H1 (cell line): ENCODE measurements at regions of chr12 and their contacts with region 1.

Region 1: DNA sequence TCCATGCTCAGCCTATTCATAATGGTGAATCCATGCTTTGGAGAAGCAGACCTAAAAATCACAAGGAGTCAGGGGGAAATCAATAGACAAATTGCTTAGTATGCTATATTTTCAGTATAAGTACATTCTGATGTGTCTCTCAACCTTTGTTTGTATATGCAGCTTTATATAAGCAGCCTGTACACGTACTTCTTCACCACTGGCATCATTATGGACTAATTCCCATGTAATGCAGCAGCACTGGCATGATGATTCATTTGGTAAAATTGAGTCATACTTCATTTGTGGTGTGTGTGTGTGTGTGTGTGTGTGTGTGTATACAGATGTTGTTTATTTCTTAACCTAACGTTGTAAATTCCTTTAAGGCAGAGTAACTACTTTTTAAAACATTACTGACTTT is 10.9 kb downstream of the DCP1B start:
- DNase-seq: no peak
- H3K4me3 ChIP-seq: no peak overlapping the region
- H3K27ac ChIP-seq: no peak overlapping the region
- H3K4me1 ChIP-seq: peaks cover 0 to 16% (median 9%) of the 10 kb centered on the region in 4 experiments; a peak in 5 of 7 replicates
- H3K27me3 ChIP-seq: no peaks in the 10 kb centered on the region
- CTCF ChIP-seq: no peak
- EP300 ChIP-seq: no peak
- POLR2A ChIP-seq: no peak
- RAD21 ChIP-seq: no peak

Region 2: DNA sequence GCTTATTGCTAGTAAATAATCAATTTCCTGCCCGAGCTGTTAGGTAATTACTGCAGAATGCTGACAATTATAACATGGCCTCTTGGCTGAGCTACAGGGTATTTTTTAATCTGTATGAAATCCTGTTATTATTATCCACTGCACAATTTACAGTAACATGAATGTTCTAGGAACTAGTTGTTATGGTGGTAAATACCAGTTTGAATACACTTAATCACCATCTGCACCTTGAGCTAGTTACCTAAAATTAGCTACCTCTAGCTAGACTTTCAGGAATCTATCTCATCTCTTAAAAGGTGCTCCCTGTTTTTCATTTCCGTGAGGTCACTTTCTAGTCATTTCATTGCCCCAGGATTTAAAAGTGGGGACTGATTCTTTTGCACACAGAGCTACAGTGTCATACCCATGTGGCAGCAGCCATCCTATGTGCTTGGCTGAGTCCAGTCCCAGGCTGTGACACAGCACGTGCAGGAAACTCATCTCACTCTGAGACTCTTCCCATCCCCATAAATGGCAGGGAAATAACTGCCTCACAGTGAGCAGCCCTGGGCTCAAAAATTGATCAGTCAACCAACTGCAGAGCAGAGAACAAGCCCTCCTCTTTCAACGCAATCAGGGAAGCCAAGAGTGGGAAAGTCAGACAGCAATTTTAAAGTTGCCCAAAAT is 26.6 kb before region 1 on chr12:
- CTCF ChIA-PET with region 1: no interaction called
- POLR2A ChIA-PET with region 1: no interaction called
- DNase-seq: no peak
- H3K4me3 ChIP-seq: no peak overlapping the region
- H3K27ac ChIP-seq: no peak overlapping the region
- H3K4me1 ChIP-seq: no peaks in the 10 kb centered on the region
- H3K27me3 ChIP-seq: no peaks in the 10 kb centered on the region
- CTCF ChIP-seq: no peak
- EP300 ChIP-seq: no peak
- POLR2A ChIP-seq: no peak
- RAD21 ChIP-seq: no peak

Region 3: DNA sequence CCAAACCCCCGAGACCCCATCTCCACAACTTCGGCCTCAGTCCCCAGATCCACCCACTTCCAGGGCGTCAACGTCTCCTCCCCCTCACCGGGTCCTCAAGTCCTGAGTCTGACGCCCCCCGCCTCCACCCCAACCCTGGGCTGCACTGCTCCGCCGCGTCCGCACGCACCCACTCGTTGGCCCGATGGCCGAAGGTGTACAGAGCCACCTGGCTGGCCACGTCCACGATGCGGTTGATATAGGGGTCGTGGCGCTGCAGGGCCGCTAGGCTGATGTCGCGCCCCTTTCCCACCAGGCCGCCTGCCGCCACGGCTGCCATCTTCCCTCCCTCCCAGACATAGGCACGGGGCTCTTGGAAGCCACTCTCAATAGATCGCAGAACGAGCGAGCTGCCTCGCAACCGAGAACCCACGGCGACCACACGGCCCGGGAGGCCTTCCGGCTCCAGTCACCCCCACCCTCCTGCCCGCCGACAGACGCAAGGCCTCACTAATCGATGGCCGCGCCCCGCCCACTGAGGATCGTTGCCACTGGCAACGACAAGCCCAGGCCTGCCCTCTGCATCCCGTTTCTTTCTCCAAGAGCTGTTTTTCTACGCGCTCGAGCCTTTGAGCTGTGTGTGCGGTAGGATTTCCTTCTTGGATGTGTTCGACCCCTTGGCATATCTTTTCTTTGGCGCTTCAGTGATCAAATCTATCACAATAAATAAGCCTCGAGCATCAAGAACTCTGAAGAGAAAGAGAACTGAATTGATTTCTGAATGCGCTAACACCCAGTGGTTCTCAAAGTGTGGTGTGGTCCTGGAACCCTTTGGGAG is 11.0 kb after region 1 on chr12 and contains the start of gene DCP1B:
- CTCF ChIA-PET with region 1: interaction called, 43 read pairs
- POLR2A ChIA-PET with region 1: interaction called, 10 read pairs
- DNase-seq: peak; percentile 93 to 96
- H3K4me3 ChIP-seq: peak within 1 kb of the TSS; percentile 87 to 96 (median 90)
- H3K27ac ChIP-seq: peak within 1 kb of the TSS; percentile 90
- H3K4me1 ChIP-seq: peaks cover 0 to 4% (median 2%) of the 10 kb centered on the region in 4 experiments; a peak in 2 of 7 replicates
- H3K27me3 ChIP-seq: no peaks in the 10 kb centered on the region
- CTCF ChIP-seq: no peak
- EP300 ChIP-seq: 0 out of 3 replicates have a peak, but pooled peaks of 1 of the 2 experiments have one; percentile 19
- POLR2A ChIP-seq: peak in 1 of 2 experiments; percentile 80; a peak in 2 of 3 replicates
- RAD21 ChIP-seq: no peak
- total RNA-seq, gene DCP1B: 14.8 and 16.3 TPM in 2 replicates

Region 4: GRCh38 chr12:2013527-2014223 is 20.3 kb after region 1 on chr12:
- CTCF ChIA-PET with region 1: interaction called, 43 read pairs
- POLR2A ChIA-PET with region 1: no interaction called
- DNase-seq: no peak
- H3K4me3 ChIP-seq: no peak overlapping the region
- H3K27ac ChIP-seq: no peak overlapping the region
- H3K4me1 ChIP-seq: peaks cover 2 to 5% (median 3%) of the 10 kb centered on the region in 4 experiments; a peak in 5 of 7 replicates
- H3K27me3 ChIP-seq: no peaks in the 10 kb centered on the region
- CTCF ChIP-seq: no peak
- EP300 ChIP-seq: no peak
- POLR2A ChIP-seq: no peak
- RAD21 ChIP-seq: peak in 1 of 2 experiments; percentile 10; a peak in 1 of 4 replicates